Prostate gland (tissue), 2 donors: ENCODE measurements at regions of chr5 and their contacts with region 1.

Region 1: GRCh38 chr5:96662725-96663513 is 743 bp downstream of the CAST start:
- DNase-seq: peak; percentile 95
- H3K4me3 ChIP-seq: peak overlapping the region; percentile 83 to 86
- H3K27ac ChIP-seq: peak overlapping the region; percentile 91 to 95
- H3K4me1 ChIP-seq: no peaks in the 10 kb centered on the region
- H3K27me3 ChIP-seq: no peaks in the 10 kb centered on the region
- CTCF ChIP-seq: no peak
- POLR2A ChIP-seq: peak; percentile 87

Region 2: GRCh38 chr5:96702503-96703383 is 39.8 kb after region 1 on chr5:
- intact Hi-C with region 1: loop called (anchors 1 kb)
- DNase-seq: peak; percentile 87
- H3K4me3 ChIP-seq: peak overlapping the region; percentile 39 to 47
- H3K27ac ChIP-seq: peak overlapping the region; percentile 83
- H3K4me1 ChIP-seq: no peaks in the 10 kb centered on the region
- H3K27me3 ChIP-seq: no peaks in the 10 kb centered on the region
- CTCF ChIP-seq: peak in 1 of 4 experiments; percentile 12
- POLR2A ChIP-seq: peak; percentile 79

Region 3: DNA sequence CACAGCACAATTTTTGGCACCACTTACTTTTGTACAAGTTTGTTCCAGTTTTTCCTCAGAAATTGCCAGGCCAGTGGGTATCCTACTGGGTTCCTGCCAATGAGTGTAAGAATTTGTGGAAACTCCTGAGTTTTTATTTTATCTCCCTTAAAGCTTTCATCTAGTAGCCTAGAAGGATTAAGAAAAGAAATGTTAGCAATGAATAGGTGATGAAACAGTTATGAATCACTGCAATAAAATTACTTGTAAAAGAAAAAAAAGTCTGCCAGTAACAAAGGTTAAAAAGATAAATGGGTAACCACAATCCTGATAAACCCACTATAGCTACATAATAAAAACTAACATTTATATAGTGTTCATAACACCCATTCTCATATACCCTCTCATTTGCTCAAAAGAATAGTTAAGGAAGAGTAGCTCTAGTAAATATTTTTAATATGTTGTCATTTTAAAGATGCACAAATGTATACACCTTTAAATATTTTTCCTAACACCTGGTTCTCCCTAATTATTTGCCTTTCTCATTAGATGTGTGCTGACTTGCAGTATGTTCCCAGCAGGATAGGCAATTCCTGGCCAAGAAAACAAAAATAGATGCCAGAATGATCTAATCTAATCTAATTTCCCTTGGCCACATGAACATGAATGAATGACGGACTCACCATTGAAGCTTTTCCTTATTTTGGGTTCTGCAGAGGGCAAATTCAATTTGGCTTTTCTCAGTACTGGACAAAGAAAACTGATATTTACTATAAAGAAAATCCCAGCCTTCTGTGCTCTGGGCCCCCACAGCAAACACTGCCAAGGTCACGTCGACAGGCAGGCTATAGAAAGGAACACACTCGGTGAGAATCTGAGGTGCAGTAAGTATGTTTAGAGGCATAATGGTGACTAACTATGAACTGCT is 118.4 kb after region 1 on chr5:
- intact Hi-C with region 1: no loop called
- DNase-seq: peak; percentile 49
- H3K4me3 ChIP-seq: no peak overlapping the region
- H3K27ac ChIP-seq: peak overlapping the region; percentile 31 to 47
- H3K4me1 ChIP-seq: peaks cover 14% of the 10 kb centered on the region
- H3K27me3 ChIP-seq: no peaks in the 10 kb centered on the region
- CTCF ChIP-seq: no peak
- POLR2A ChIP-seq: no peak